Activated CD8-positive, alpha-beta memory T cell treated with anti-CD3 and anti-CD28 coated beads, Interleukin-2, amount 10 ng/mL, durations not matched to agents 7 days and 5 days (primary cell): ENCODE measurements at regions of chr4 and their contacts with region 1.

Region 1: DNA sequence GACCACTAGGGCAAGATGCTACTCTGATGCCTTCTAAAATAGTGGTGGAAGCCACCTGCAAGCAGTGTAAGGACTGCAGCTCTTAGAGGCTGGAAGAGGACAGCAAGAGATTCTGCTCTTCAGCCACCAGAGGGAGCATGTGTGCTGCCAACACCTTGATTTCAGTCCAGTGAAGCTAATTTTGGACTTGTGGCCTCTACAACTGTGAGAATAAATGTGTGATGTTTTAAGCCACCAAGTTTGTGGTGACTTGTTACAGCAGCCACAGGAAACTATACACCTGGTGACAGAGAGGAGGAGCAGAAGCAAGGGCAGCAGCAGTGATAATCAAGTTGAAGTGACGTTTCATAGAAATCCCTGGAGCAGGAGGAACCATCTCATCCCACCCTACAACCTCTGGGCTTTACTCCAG is 55.9 kb downstream of the FGFBP1 start:
- DNase-seq: peak; percentile 65
- ATAC-seq: peak; percentile 82
- H3K4me3 Mint-ChIP-seq: no peak overlapping the region
- H3K27ac Mint-ChIP-seq: no peak overlapping the region
- H3K4me1 Mint-ChIP-seq: peaks cover 2% of the 10 kb centered on the region
- H3K27me3 Mint-ChIP-seq: peaks cover 30% of the 10 kb centered on the region

Region 2: GRCh38 chr4:15286041-15286440 is 596.6 kb before region 1 on chr4:
- CTCF ChIA-PET with region 1: no interaction called
- DNase-seq: no peak
- ATAC-seq: no peak
- H3K4me3 Mint-ChIP-seq: no peak overlapping the region
- H3K27ac Mint-ChIP-seq: no peak overlapping the region
- H3K4me1 Mint-ChIP-seq: no peaks in the 10 kb centered on the region
- H3K27me3 Mint-ChIP-seq: no peaks in the 10 kb centered on the region

Region 3: DNA sequence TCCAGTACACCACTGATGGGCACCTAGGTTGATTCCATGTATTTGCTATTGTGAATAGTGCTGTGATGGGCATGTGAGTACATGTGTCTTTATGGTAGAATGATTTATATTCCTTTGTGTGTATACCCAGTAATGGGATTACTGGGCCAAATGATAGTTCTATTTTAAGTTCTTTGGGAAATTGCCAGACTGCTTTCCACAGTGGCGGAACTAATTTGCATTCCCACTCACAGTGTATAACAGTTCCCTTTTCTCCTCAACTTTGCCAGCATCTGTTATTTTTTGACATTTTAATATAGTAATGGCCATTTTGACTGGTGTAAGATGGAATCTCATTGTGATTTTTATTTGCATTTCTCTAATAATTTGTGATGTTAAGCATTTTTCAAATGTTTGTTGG is 387.1 kb before region 1 on chr4:
- CTCF ChIA-PET with region 1: no interaction called
- DNase-seq: no peak
- ATAC-seq: no peak
- H3K4me3 Mint-ChIP-seq: no peak overlapping the region
- H3K27ac Mint-ChIP-seq: no peak overlapping the region
- H3K4me1 Mint-ChIP-seq: no peaks in the 10 kb centered on the region
- H3K27me3 Mint-ChIP-seq: no peaks in the 10 kb centered on the region

Region 4: GRCh38 chr4:15805583-15806517 is 76.8 kb before region 1 on chr4:
- CTCF ChIA-PET with region 1: interaction called, 11 read pairs
- DNase-seq: no peak
- ATAC-seq: no peak
- H3K4me3 Mint-ChIP-seq: no peak overlapping the region
- H3K27ac Mint-ChIP-seq: no peak overlapping the region
- H3K4me1 Mint-ChIP-seq: peaks cover 51% of the 10 kb centered on the region
- H3K27me3 Mint-ChIP-seq: no peaks in the 10 kb centered on the region

Region 5: GRCh38 chr4:15855804-15856475 is 26.7 kb before region 1 on chr4:
- CTCF ChIA-PET with region 1: interaction called, 12 read pairs
- DNase-seq: no peak
- ATAC-seq: no peak
- H3K4me3 Mint-ChIP-seq: no peak overlapping the region
- H3K27ac Mint-ChIP-seq: no peak overlapping the region
- H3K4me1 Mint-ChIP-seq: no peaks in the 10 kb centered on the region
- H3K27me3 Mint-ChIP-seq: peaks cover 8% of the 10 kb centered on the region

Region 6: DNA sequence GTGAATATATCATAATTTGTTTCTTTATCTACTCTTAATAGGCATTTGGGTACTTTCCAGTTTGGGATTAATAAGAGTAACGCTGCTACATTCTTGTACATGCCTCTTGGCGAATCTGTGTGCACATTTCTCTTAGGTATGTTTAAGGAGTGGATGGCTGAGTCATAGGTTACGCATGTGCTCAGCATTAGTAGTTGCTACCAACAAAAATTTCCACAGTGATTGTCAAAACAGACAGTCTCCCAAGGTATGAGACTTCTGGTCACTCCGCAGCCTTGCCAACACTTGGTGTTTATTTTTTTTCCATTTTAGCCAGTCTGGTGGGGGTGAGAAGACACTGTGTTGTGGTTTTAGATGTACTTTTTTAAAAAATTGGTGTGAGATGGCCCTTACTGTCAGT is 11.3 kb after region 1 on chr4:
- CTCF ChIA-PET with region 1: interaction called, 10 read pairs
- DNase-seq: no peak
- ATAC-seq: no peak
- H3K4me3 Mint-ChIP-seq: no peak overlapping the region
- H3K27ac Mint-ChIP-seq: no peak overlapping the region
- H3K4me1 Mint-ChIP-seq: no peaks in the 10 kb centered on the region
- H3K27me3 Mint-ChIP-seq: peaks cover 60% of the 10 kb centered on the region

Region 7: DNA sequence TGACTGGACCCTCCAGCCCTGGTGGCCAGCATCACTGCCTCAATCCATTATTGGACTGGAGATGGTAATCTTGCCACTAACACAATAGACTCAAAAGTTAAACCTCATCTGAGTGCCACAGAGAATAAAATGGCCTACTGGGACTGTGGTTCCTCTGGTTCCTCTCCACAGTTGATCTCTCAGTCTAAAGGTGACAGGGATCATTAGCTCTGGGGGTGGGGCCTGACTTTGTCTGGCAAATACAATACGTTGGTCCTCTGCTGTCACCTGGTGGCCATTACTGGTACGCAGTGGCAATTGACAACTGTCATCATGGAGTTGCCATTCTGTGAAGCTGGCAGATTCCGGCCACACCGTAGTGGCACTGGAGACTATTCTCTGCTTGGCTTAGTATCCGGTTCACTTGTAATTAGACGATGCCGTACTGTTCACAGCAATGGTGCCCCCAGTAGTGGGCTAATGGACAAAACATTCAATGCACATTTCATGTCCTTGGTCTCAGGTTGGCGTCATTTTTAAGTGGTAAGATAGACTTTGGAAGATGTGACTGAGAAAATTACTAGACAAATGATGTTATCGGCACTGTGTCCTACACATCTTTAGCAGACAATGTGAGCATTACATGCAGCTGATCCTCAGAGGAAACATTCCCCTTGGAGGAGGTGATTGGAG is 73.6 kb after region 1 on chr4:
- CTCF ChIA-PET with region 1: interaction called, 68 read pairs
- DNase-seq: peak; percentile 89
- ATAC-seq: peak; percentile 95
- H3K4me3 Mint-ChIP-seq: no peak overlapping the region
- H3K27ac Mint-ChIP-seq: no peak overlapping the region
- H3K4me1 Mint-ChIP-seq: peaks cover 1% of the 10 kb centered on the region
- H3K27me3 Mint-ChIP-seq: peaks cover 29% of the 10 kb centered on the region

Region 8: DNA sequence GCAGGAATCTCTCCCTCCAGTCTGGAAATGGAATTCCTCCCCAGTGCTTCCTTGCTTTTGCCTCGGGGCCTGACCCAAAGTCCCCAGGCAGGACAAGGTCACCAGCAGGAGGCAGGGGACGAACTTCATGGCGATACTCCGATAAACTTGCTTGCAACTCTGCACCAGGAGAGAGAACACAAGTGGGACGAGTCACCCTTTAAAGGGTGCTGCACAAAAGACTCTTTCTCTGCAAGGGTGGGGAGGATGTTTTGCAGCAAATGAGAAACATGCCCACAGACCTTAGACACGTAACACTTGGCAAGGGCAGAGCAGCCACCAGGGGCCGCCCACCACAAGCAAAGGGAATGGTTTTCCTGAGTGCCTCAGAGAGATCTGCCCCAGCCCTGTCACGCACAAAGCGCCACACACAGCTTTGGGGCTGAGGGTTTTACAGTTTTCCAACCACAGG is 80.3 kb after region 1 on chr4 and contains the start of gene FGFBP2:
- CTCF ChIA-PET with region 1: interaction called, 26 read pairs
- DNase-seq: peak; percentile 87
- ATAC-seq: peak; percentile 87
- H3K4me3 Mint-ChIP-seq: peak within 1 kb of the TSS; percentile 51
- H3K27ac Mint-ChIP-seq: peak within 1 kb of the TSS; percentile 56
- H3K4me1 Mint-ChIP-seq: peaks cover 28% of the 10 kb centered on the region
- H3K27me3 Mint-ChIP-seq: peaks cover 33% of the 10 kb centered on the region
- total RNA-seq, gene FGFBP2: 2.0 to 9.0 TPM

Region 9: GRCh38 chr4:16001484-16001858 is 118.8 kb after region 1 on chr4:
- CTCF ChIA-PET with region 1: interaction called, 36 read pairs
- DNase-seq: peak; percentile 69
- ATAC-seq: peak; percentile 94
- H3K4me3 Mint-ChIP-seq: no peak overlapping the region
- H3K27ac Mint-ChIP-seq: no peak overlapping the region
- H3K4me1 Mint-ChIP-seq: no peaks in the 10 kb centered on the region
- H3K27me3 Mint-ChIP-seq: peaks cover 20% of the 10 kb centered on the region

Region 10: GRCh38 chr4:16079046-16079445 is 196.4 kb after region 1 on chr4:
- CTCF ChIA-PET with region 1: no interaction called
- DNase-seq: no peak
- ATAC-seq: no peak
- H3K4me3 Mint-ChIP-seq: no peak overlapping the region
- H3K27ac Mint-ChIP-seq: no peak overlapping the region
- H3K4me1 Mint-ChIP-seq: peaks cover 9% of the 10 kb centered on the region
- H3K27me3 Mint-ChIP-seq: peaks cover 54% of the 10 kb centered on the region

Region 11: DNA sequence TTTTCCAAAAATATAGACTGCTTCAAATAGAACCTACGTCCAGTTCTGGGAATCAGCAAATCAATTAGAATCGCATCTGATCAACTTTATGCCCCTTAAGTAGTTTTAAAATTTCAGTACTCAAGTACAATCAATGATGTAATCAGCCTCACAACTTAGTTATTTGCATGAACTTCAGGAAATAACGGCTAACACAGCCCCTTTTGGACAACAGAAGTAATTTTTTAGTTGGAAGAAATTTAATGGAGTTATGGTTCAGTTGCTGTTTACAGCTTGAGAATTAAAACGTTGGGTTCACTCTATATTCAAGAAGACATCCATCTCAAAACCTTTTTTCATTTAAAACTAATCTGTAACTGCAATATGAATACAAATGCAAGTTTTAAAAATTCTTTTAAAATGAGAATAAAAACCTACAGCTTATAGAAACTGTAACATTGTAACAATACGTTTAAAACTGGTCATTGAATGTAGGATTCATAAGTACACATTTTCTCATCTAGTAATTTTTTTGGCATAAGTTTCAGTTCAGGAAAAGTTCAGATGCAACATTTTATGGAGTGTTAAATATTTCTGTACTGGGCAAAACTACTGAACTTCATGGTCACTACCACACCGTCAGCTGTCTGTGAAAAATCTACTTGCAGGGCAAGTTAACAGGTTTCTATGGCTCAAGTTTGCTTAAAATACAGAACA is 342.6 kb after region 1 on chr4:
- CTCF ChIA-PET with region 1: no interaction called
- DNase-seq: no peak
- ATAC-seq: no peak
- H3K4me3 Mint-ChIP-seq: peak overlapping the region; percentile 87
- H3K27ac Mint-ChIP-seq: peak overlapping the region; percentile 94
- H3K4me1 Mint-ChIP-seq: peaks cover 41% of the 10 kb centered on the region
- H3K27me3 Mint-ChIP-seq: no peaks in the 10 kb centered on the region